Endothelial cell of umbilical vein (primary cell): ENCODE measurements at regions of chr12 and their contacts with region 1.

Region 1: DNA sequence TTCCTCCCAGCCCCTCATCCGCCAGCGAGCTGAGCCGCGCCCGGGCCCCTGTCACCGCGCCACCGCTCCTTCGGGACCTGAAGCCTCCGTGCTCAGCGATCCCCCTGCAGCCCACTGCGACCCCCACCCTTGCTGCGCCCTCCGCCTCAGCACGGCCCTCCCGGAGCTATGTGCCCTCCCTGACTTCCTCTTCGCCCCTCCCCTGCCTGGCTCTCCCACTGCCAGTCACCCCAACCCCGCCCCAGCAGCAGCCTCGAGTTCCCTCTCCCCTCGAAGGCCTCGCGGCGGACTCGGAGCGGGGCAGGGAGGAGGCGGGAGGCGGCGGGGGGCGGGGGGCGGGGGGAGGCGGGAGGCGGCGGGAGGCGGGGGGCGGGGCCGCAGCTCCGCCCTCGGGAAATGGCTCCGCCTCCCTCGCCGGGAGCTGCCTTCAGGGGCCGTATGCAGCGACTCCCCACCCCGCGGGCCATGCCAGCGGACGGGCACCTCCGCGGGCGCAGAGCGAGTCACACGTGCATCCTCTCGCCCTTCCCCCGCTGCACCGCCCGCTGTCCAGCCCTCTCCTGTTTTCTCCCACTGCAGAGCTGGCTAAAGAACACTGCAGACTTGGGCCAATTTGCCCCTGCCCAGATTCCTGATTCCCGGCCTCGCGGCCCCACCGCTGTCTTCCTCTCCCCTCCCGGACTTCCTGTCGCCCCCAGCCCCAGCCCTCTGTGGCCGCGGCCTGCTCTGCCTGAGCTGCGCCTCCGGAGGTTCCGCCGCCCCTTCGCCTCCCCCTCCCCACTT is 29.1 kb upstream of the ADIPOR2 start:
- DNase-seq: peak; percentile 90
- H3K4me3 ChIP-seq: peak overlapping the region in 1 of 3 experiments; percentile 37
- H3K27ac ChIP-seq: no peak overlapping the region
- H3K4me1 ChIP-seq: peaks cover 13% of the 10 kb centered on the region
- H3K27me3 ChIP-seq: no peaks in the 10 kb centered on the region
- CTCF ChIP-seq: no peak
- POLR2A ChIP-seq: no peak

Region 2: GRCh38 chr12:1680804-1681492 is 19.2 kb after region 1 on chr12:
- CTCF ChIA-PET with region 1: interaction called, 8 read pairs
- POLR2A ChIA-PET with region 1: interaction called, 8 read pairs
- dilution Hi-C with region 1: no loop called
- intact Hi-C with region 1: loop called (anchors 1 kb)
- DNase-seq: peak; percentile 95
- H3K4me3 ChIP-seq: no peak overlapping the region
- H3K27ac ChIP-seq: peak overlapping the region; percentile 76
- H3K4me1 ChIP-seq: peaks cover 15% of the 10 kb centered on the region
- H3K27me3 ChIP-seq: peaks cover 0 to 2% of the 10 kb centered on the region in 2 experiments
- CTCF ChIP-seq: no peak
- POLR2A ChIP-seq: no peak

Region 3: DNA sequence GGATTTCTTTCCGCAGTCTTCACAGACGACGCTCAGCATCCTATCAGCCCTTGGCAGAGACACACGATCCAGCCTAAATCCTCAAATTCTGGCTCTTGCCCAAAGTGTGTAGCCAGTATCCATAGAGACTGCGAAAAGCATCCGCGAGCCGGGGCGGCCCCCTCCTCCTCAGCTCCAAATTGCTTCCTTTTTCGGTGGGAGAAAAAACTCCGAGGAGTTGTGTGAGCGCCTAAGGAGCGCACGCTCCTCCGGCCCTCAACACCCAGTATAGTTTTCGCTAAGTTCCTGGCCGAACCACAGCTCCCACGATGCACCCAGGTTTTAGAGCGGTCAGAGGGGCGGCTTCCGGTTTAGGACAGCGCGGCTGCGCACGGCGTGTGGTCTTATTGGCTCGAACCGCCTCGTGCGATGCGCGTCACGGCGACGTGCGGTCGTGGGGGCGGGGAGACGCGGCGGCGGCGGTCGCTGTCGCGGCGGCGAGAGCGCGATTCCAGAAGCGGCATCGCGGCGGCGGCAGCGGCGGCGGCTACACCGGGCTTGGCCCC is 28.9 kb after region 1 on chr12 and contains the start of gene ADIPOR2:
- CTCF ChIA-PET with region 1: interaction called, 3 read pairs
- POLR2A ChIA-PET with region 1: interaction called, 6 read pairs
- dilution Hi-C with region 1: no loop called
- intact Hi-C with region 1: loop called (anchors 1 kb)
- DNase-seq: peak; percentile 94
- H3K4me3 ChIP-seq: peak within 1 kb of the TSS; percentile 72 to 95 (median 90)
- H3K27ac ChIP-seq: peak within 1 kb of the TSS; percentile 93
- H3K4me1 ChIP-seq: peaks cover 14% of the 10 kb centered on the region
- H3K27me3 ChIP-seq: no peaks in the 10 kb centered on the region
- CTCF ChIP-seq: no peak
- POLR2A ChIP-seq: peak; percentile 91
- total RNA-seq, gene ADIPOR2: 57.3 and 59.4 TPM in 2 replicates

Region 4: DNA sequence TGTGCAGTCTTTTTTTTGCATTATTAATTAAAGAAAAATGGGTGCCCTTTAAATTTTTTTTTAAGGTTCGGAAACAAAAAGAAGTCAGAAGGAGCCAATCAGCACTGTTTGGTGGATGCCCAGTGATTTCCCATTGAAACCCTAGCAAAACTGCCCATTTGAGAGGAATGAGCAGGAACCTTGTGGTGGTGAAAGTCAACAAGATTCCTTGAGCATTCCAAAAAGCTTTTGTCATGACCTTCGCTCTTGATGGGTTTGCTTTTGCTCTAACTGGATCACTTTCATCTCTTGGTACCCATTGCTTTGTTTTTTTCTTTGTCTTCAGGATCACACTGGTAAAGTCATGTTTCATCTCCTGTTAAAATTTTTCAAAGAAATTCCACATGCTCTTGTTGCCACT is 83.2 kb after region 1 on chr12:
- CTCF ChIA-PET with region 1: no interaction called
- POLR2A ChIA-PET with region 1: no interaction called
- dilution Hi-C with region 1: no loop called
- intact Hi-C with region 1: no loop called
- DNase-seq: no peak
- H3K4me3 ChIP-seq: no peak overlapping the region
- H3K27ac ChIP-seq: no peak overlapping the region
- H3K4me1 ChIP-seq: peaks cover 7% of the 10 kb centered on the region
- H3K27me3 ChIP-seq: no peaks in the 10 kb centered on the region
- CTCF ChIP-seq: no peak
- POLR2A ChIP-seq: no peak